Right ventricle myocardium inferior (tissue), 1 donor: ENCODE measurements at regions of chr2 and their contacts with region 1.

Region 1: GRCh38 chr2:121596221-121597080 is 52.8 kb downstream of the CLASP1 start:
- DNase-seq: peak; percentile 64
- ATAC-seq: peak; percentile 78

Region 2: DNA sequence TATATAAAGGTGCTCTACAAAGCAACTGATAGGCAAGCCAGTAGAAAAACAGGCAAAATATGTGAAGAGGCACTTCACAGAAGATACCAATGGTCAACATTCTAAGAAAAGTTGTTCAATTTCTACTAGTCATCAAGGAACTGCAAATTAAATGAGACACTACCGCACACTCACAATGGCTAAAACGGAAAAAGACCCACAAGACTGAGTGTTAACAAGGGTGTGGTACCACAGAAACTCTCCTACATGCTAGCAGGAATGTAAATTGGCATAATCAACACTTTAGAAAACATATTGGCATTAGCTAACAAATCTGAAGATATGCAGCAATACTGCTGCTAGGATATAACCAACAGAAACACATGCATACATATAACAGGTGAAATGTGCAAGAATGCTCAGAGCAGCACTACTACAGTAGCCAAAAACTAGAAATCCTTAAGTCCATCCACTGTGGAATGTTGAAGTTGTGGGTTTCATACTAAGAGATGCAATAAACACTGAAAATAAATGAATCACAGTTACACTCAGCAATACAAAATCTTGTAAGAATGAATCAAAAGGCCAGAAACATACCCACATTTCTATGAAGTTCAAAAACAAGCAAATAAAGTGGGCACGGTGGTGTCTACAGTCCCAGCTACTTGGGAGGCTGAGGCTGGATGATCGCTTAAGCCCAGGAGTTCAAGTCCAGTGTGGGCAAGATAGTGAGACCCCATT is 56.5 kb before region 1 on chr2:
- intact Hi-C with region 1: loop called (anchors 5 kb)
- DNase-seq: no peak
- ATAC-seq: no peak

Region 3: GRCh38 chr2:121649596-121650314 is 53.3 kb after region 1 on chr2:
- intact Hi-C with region 1: loop called (anchors 1 kb)
- DNase-seq: peak; percentile 98
- ATAC-seq: peak; percentile 99